ENCODE measurements at regions of chrX and their contacts with region 1.

Region 1: GRCh38 chrX:118603981-118604380 is 108.4 kb downstream of the DOCK11 start:
- DNase-seq: peak; percentile 50
- ATAC-seq: peak; percentile 64
- H3K4me3 ChIP-seq: no peak overlapping the region
- H3K27ac ChIP-seq: no peak overlapping the region
- H3K4me1 ChIP-seq: no peaks in the 10 kb centered on the region
- H3K27me3 ChIP-seq: no peaks in the 10 kb centered on the region
- CTCF ChIP-seq: peak; percentile 76
- EP300 ChIP-seq: no peak
- POLR2A ChIP-seq: no peak
- RAD21 ChIP-seq: peak; percentile 40; the same call in 1 of the 2 replicates

Region 2: DNA sequence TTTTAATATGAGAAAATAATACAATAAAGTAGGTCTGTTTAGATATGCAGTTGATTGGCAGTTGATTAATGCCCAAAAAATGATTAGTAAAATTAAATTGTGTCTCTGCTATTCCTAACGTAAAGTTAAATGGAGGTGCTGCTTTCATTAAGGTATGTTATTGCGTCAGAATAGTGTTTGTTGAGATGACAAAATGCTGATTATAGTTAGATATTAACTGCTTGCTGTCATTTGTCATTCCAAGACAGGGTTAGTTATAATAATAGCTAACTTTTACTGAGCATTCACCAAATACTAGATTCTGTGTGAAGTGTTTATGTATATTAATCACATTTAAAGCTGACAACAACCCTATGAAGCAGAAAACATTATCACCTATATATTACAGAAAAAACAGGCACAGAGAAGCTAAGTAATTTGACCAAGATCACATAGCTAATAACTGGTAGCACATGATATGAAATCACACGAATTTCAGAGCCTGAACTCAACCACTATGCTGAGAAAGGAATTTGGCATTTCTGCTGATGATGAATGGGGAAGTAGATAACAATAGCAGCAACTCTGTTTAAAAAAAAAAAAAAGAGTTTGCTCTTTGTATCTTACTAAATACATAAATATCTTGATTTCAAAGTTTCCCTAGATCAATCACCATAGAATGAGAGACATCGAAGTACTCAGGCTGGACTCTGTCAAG is 317.8 kb before region 1 on chrX:
- CTCF ChIA-PET with region 1: no interaction called
- POLR2A ChIA-PET with region 1: no interaction called
- in situ Hi-C with region 1: no loop called
- intact Hi-C with region 1: no loop called
- DNase-seq: no peak
- ATAC-seq: no peak
- H3K4me3 ChIP-seq: no peak overlapping the region
- H3K27ac ChIP-seq: no peak overlapping the region
- H3K4me1 ChIP-seq: no peaks in the 10 kb centered on the region
- H3K27me3 ChIP-seq: no peaks in the 10 kb centered on the region
- CTCF ChIP-seq: no peak
- EP300 ChIP-seq: no peak
- POLR2A ChIP-seq: no peak
- RAD21 ChIP-seq: no peak

Region 3: DNA sequence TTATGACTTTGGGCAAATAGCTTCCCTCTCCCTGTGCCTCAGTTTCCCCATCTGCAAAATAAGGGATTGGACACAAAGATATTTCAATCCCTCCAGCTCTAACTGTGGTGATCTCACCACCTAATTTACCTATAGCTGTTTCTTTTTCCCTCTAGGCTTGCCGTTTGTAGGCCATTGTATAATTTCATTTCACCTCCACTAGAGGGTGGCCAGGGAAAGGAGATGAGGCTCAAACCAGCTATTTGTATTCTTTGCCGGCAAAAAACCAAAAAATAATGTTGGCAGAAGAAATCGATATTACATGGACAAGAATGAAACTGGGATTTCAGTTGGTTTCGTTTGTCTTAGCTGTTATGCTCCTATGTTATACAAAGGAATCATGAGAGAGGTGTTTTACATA is 144.5 kb before region 1 on chrX:
- CTCF ChIA-PET with region 1: no interaction called
- POLR2A ChIA-PET with region 1: no interaction called
- in situ Hi-C with region 1: no loop called
- intact Hi-C with region 1: loop called (anchors 1 kb)
- DNase-seq: peak; percentile 23
- ATAC-seq: peak; percentile 80
- H3K4me3 ChIP-seq: no peak overlapping the region
- H3K27ac ChIP-seq: no peak overlapping the region
- H3K4me1 ChIP-seq: no peaks in the 10 kb centered on the region
- H3K27me3 ChIP-seq: no peaks in the 10 kb centered on the region
- CTCF ChIP-seq: peak; percentile 49
- EP300 ChIP-seq: no peak
- POLR2A ChIP-seq: no peak
- RAD21 ChIP-seq: no peak

Region 4: DNA sequence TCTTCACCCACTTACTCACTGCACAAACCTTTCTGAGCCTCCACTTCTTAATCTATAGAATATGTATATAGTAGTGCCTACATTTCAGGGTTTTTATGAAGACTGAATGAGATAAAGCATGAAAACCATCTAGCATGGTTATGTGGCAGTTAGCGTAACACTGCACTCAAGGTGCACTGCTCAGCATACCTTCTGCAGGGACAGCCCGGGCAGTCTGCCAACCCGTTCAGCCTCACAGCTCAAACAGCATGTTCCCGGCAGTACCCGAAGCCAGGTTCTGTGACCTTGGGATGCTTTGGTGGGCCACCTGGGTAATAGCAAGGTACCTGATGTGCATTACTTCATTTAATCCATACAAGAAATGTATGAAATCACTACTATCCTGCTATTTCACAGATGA is 26.9 kb before region 1 on chrX:
- CTCF ChIA-PET with region 1: no interaction called
- POLR2A ChIA-PET with region 1: no interaction called
- in situ Hi-C with region 1: no loop called
- intact Hi-C with region 1: no loop called
- DNase-seq: peak; percentile 0
- ATAC-seq: no peak; the same call in 2 of the 3 replicates
- H3K4me3 ChIP-seq: no peak overlapping the region
- H3K27ac ChIP-seq: no peak overlapping the region
- H3K4me1 ChIP-seq: no peaks in the 10 kb centered on the region
- H3K27me3 ChIP-seq: no peaks in the 10 kb centered on the region
- CTCF ChIP-seq: no peak
- EP300 ChIP-seq: no peak
- POLR2A ChIP-seq: no peak
- RAD21 ChIP-seq: no peak

Region 5: GRCh38 chrX:118644378-118644777 is 40.4 kb after region 1 on chrX:
- CTCF ChIA-PET with region 1: no interaction called
- POLR2A ChIA-PET with region 1: no interaction called
- in situ Hi-C with region 1: no loop called
- intact Hi-C with region 1: no loop called
- DNase-seq: peak; percentile 54
- ATAC-seq: peak; percentile 87
- H3K4me3 ChIP-seq: no peak overlapping the region
- H3K27ac ChIP-seq: no peak overlapping the region
- H3K4me1 ChIP-seq: no peaks in the 10 kb centered on the region
- H3K27me3 ChIP-seq: no peaks in the 10 kb centered on the region
- CTCF ChIP-seq: peak; percentile 58
- EP300 ChIP-seq: no peak
- POLR2A ChIP-seq: no peak
- RAD21 ChIP-seq: peak; percentile 50; the same call in 1 of the 2 replicates

Region 6: DNA sequence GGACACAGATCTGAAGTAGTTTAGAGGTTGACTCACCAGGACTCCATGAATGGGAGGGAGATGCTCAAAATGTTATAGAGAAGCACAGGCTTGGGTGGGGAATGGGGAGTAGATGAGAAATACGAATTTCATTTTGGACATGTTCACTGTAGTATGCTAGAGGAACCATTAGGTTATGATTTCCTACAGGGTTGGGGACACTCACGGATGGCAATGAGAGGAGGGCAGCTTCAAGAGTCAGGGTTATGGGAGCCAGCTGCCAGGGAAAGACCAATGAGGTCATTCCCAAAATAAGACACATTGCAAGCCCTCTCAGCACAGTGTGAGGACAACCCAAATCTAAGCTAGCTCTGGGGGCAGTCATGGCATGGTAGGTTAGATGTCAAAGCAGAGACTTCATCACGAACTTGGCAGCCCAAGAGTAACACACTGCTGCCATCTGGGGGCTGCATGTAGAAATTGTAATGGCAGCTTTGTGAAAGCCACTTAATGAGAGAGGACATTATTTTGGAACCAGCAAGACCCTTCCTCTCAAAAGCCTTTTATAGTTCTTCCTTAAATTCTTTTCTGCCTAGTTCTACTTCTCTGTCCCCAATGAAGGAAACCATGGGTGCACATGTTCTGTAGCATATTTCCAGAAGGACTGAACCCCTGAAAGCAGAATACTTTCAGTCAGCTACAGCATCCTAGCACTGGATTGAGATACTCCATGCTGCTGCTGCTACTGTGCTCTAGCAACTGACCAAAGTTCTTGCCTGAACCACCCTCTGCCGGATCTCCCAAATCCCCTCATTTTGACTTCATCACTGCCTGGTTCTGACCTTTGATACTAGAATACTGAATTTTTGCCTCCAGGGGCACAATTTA is 203.4 kb after region 1 on chrX:
- CTCF ChIA-PET with region 1: interaction called, 9 read pairs
- POLR2A ChIA-PET with region 1: no interaction called
- in situ Hi-C with region 1: no loop called
- intact Hi-C with region 1: loop called (anchors 1 kb)
- DNase-seq: peak; percentile 33
- ATAC-seq: peak; percentile 68
- H3K4me3 ChIP-seq: no peak overlapping the region
- H3K27ac ChIP-seq: no peak overlapping the region
- H3K4me1 ChIP-seq: no peaks in the 10 kb centered on the region
- H3K27me3 ChIP-seq: no peaks in the 10 kb centered on the region
- CTCF ChIP-seq: peak; percentile 77
- EP300 ChIP-seq: no peak
- POLR2A ChIP-seq: no peak
- RAD21 ChIP-seq: 0 out of 2 replicates have a peak, but pooled peaks have one; percentile 26